K562 (cell line): ENCODE measurements at regions of chr6 and their contacts with region 1.

Region 1: GRCh38 chr6:119138906-119139541 is 60.6 kb upstream of the FAM184A start:
- DNase-seq: peak in 2 of 4 experiments; percentile 66 to 86
- ATAC-seq: peak; percentile 75
- H3K4me3 ChIP-seq: no peak overlapping the region
- H3K27ac ChIP-seq: peak overlapping the region; percentile 83
- H3K4me1 ChIP-seq: peaks cover 37 to 49% of the 10 kb centered on the region in 2 experiments
- H3K27me3 ChIP-seq: no peaks in the 10 kb centered on the region
- CTCF ChIP-seq: no peak
- EP300 ChIP-seq: peak; percentile 96
- POLR2A ChIP-seq: no peak
- RAD21 ChIP-seq: peak in 1 of 2 experiments; percentile 31; a peak in 2 of 4 replicates

Region 2: DNA sequence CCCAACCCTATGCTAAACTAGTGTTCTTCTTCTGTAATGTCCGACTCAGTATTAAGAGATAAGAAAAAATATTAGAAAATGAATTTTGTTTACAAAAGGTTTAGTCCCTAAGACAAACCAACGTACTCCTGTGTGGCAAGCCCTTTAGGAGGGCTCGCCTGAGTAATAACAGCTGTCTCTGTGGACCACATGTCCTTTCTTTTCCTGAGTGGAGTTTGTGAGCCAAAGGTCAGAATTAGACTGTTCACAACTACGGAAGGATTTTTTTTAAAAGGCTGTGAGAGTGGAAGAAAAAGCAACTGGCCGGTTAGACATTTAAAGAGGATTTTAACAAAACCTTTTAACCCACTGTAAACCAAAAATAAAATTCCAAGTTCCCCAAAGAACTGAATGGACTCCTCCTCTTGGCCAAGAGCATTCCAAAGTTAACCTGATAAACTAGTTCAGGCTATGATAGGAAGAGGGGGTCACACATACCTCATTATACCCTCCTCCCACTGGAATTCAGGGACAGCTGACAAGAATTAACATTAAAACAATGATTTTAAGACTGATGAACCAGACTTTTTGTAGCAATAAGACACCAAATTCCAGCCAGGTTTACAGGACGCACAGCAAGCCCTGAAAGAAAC is 104.1 kb before region 1 on chr6:
- CTCF ChIA-PET with region 1: no interaction called
- POLR2A ChIA-PET with region 1: no interaction called
- in situ Hi-C with region 1: no loop called
- intact Hi-C with region 1: no loop called
- DNase-seq: no peak
- ATAC-seq: peak; percentile 56
- H3K4me3 ChIP-seq: no peak overlapping the region
- H3K27ac ChIP-seq: no peak overlapping the region
- H3K4me1 ChIP-seq: peaks cover 0 to 20% of the 10 kb centered on the region in 2 experiments; a peak in 2 of 5 replicates
- H3K27me3 ChIP-seq: no peaks in the 10 kb centered on the region
- CTCF ChIP-seq: no peak
- EP300 ChIP-seq: no peak
- POLR2A ChIP-seq: no peak
- RAD21 ChIP-seq: no peak

Region 3: DNA sequence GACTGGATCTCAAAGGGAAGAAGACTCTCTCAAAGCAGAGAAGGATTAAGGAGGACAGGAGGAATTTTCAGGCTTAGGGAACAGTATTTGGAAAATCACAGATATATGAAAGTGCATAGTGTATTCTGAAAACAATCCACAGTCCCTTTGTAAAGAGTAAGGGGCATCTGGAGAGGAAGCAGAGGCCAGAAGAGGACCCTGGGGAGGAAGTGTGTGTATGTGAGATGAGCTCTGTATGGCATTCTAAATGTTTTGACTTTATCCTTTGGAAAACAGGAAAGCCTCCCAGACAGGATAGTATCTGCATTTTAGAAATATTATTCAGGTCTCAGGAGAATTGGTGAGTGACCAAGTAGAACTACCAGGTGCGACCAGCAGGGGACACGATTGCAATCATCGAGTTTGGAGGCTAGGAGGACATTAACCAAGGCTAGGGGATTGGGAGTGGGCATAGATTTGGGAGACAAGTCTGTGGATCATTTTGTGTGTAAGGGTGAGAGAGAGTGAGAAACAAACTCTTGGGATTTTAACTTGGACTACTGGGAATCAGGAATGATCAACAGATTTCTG is 22.2 kb before region 1 on chr6:
- CTCF ChIA-PET with region 1: no interaction called
- POLR2A ChIA-PET with region 1: no interaction called
- in situ Hi-C with region 1: no loop called
- intact Hi-C with region 1: no loop called
- DNase-seq: peak in 3 of 4 experiments; percentile 21 to 40 (median 27)
- ATAC-seq: peak; percentile 77
- H3K4me3 ChIP-seq: no peak overlapping the region
- H3K27ac ChIP-seq: no peak overlapping the region
- H3K4me1 ChIP-seq: peaks cover 3 to 8% of the 10 kb centered on the region in 2 experiments; a peak in 2 of 5 replicates
- H3K27me3 ChIP-seq: no peaks in the 10 kb centered on the region
- CTCF ChIP-seq: peak; percentile 43 to 75 (median 56)
- EP300 ChIP-seq: no peak
- POLR2A ChIP-seq: no peak
- RAD21 ChIP-seq: peak in 1 of 2 experiments; percentile 53; a peak in 3 of 4 replicates

Region 4: GRCh38 chr6:119170447-119171087 is 31.5 kb after region 1 on chr6:
- CTCF ChIA-PET with region 1: no interaction called
- POLR2A ChIA-PET with region 1: no interaction called
- in situ Hi-C with region 1: no loop called
- intact Hi-C with region 1: loop called (anchors 2 kb)
- DNase-seq: no peak
- ATAC-seq: no peak
- H3K4me3 ChIP-seq: no peak overlapping the region
- H3K27ac ChIP-seq: no peak overlapping the region
- H3K4me1 ChIP-seq: peaks cover 0 to 32% of the 10 kb centered on the region in 2 experiments; a peak in 3 of 5 replicates
- H3K27me3 ChIP-seq: no peaks in the 10 kb centered on the region
- CTCF ChIP-seq: no peak
- EP300 ChIP-seq: peak; percentile 38; the same call in 1 of the 2 replicates
- POLR2A ChIP-seq: no peak
- RAD21 ChIP-seq: no peak

Region 5: DNA sequence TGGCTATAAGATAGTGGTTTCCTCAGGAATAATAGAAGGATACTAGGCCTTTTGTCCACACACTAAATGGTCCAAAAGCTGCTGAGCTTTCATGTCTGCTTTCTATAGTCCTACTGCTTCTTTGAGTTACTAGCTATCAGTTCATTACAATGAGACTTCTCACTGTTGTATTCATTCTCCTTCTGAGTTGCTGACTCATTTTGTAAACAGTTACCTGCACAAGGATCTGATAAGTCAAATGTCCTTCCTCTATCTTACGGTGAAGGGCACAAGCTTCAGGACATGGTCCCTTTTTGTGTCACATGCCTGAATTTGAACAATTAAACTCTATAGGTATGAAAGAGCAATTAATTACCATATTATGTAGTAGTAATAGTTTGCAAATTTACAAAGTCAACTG is 120.0 kb after region 1 on chr6:
- CTCF ChIA-PET with region 1: no interaction called
- POLR2A ChIA-PET with region 1: no interaction called
- in situ Hi-C with region 1: no loop called
- intact Hi-C with region 1: loop called (anchors 2 kb)
- DNase-seq: peak in 3 of 4 experiments; percentile 30 to 64 (median 32)
- ATAC-seq: peak; percentile 49
- H3K4me3 ChIP-seq: no peak overlapping the region
- H3K27ac ChIP-seq: peak overlapping the region; percentile 50
- H3K4me1 ChIP-seq: peaks cover 6 to 44% of the 10 kb centered on the region in 2 experiments
- H3K27me3 ChIP-seq: no peaks in the 10 kb centered on the region
- CTCF ChIP-seq: no peak
- EP300 ChIP-seq: peak; percentile 83
- POLR2A ChIP-seq: no peak
- RAD21 ChIP-seq: no peak

Region 6: GRCh38 chr6:119313937-119314884 is 175.2 kb after region 1 on chr6:
- CTCF ChIA-PET with region 1: no interaction called
- POLR2A ChIA-PET with region 1: no interaction called
- in situ Hi-C with region 1: no loop called
- intact Hi-C with region 1: loop called (anchors 5 kb)
- DNase-seq: peak in 1 of 4 experiments; percentile 35
- ATAC-seq: peak; percentile 30
- H3K4me3 ChIP-seq: no peak overlapping the region
- H3K27ac ChIP-seq: peak overlapping the region; percentile 91
- H3K4me1 ChIP-seq: peaks cover 40 to 83% of the 10 kb centered on the region in 2 experiments
- H3K27me3 ChIP-seq: no peaks in the 10 kb centered on the region
- CTCF ChIP-seq: no peak
- EP300 ChIP-seq: no peak
- POLR2A ChIP-seq: no peak
- RAD21 ChIP-seq: no peak